Breast epithelium (tissue), 4 donors: ENCODE measurements at regions of chr18 and their contacts with region 1.

Region 1: DNA sequence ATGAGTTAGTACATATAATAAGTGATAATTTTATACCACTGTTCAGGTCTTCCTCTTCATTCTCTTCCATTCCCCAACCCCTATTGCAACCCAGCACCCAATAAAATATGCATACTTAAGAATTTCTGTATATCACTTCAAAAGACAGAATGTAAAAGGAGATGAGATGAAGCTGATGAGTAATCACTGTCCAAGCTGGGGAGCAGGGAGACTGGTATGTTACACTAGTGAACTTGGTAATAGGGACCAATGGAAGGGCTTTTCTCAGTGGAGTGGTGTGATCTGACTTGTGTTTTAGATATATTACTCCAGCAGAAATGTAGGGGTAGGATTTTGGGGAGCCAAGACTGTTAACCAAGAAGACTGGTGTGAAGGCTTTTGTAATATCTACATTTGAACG is 18.0 kb upstream of the ARHGAP28 start:
- DNase-seq: no peak
- H3K4me3 ChIP-seq: no peak overlapping the region
- H3K27ac ChIP-seq: no peak overlapping the region
- H3K4me1 ChIP-seq: no peaks in the 10 kb centered on the region
- H3K27me3 ChIP-seq: no peaks in the 10 kb centered on the region
- CTCF ChIP-seq: no peak
- POLR2A ChIP-seq: no peak

Region 2: DNA sequence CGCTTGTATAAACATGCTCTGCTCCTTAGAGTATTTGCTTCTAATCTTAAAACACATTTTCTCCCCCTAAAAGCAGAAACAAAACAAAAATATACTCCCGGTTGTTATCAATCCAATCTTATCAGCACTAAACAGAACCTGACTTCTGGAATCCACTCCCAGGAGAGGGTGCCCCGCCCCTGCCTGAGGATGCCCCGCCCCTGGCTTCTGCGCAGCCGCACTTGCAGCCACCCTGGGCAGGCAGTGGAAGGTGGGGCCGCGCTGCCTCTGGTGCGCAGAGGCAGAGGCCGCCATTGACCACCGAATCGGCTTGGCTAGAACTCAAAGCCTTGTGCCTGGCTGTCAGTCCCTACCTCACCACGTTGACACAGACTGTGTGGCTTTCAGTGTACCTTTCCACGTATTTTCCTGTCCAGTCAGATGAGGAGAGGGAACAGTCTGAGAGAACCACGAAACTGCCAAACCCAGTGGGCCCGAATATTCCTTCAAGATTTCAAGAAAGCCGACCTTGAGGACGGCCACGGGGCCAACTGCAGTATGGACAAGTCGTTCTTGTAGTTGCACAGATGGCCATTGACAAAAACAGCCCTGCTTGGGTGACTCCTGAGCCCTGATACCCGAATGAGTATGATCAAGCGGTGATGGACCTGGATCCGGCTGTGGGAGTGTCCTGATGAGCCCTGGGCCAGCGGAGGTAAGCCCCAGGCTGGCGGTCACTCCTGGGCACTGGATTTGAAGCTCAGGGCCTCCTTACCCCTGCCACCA is 28.2 kb before region 1 on chr18:
- intact Hi-C with region 1: loop called (anchors 2 kb)
- DNase-seq: no peak
- H3K4me3 ChIP-seq: no peak overlapping the region
- H3K27ac ChIP-seq: no peak overlapping the region
- H3K4me1 ChIP-seq: no peaks in the 10 kb centered on the region
- H3K27me3 ChIP-seq: no peaks in the 10 kb centered on the region
- CTCF ChIP-seq: no peak
- POLR2A ChIP-seq: no peak